Aorta (tissue), 5 donors: ENCODE measurements at regions of chr10 and their contacts with region 1.

Region 1: DNA sequence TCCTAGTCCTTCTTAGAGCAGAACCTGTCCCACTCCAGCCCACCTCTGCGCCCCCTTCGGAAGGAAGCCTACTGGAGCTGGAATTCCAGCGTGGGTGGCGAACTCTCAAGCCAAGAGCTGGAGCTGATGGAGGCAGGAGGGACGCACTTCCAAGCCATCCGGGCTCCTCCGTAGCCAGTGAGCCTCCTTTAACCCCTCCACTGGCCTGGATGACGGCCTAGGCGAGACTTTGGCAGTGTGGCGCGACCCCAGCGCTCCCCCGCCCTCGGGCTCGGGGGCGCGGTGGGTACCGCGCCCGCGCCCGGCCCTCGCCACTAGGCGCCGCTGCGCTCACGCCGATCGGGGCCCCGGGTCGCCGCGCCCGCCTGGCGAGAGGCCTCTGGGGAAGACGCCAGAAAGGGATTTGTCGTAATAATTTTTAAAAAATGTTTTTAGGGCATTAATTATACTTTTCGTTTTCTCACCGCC is 5.1 kb upstream of the EMX2 start:
- DNase-seq: no peak
- ATAC-seq: no peak
- H3K4me3 ChIP-seq: no peak overlapping the region
- H3K27ac ChIP-seq: no peak overlapping the region
- H3K4me1 ChIP-seq: no peaks in the 10 kb centered on the region
- H3K27me3 ChIP-seq: no peaks in the 10 kb centered on the region

Region 2: GRCh38 chr10:117425974-117426566 is 111.4 kb before region 1 on chr10:
- intact Hi-C with region 1: no loop called
- DNase-seq: no peak
- ATAC-seq: no peak
- H3K4me3 ChIP-seq: no peak overlapping the region
- H3K27ac ChIP-seq: no peak overlapping the region
- H3K4me1 ChIP-seq: no peaks in the 10 kb centered on the region
- H3K27me3 ChIP-seq: no peaks in the 10 kb centered on the region

Region 3: DNA sequence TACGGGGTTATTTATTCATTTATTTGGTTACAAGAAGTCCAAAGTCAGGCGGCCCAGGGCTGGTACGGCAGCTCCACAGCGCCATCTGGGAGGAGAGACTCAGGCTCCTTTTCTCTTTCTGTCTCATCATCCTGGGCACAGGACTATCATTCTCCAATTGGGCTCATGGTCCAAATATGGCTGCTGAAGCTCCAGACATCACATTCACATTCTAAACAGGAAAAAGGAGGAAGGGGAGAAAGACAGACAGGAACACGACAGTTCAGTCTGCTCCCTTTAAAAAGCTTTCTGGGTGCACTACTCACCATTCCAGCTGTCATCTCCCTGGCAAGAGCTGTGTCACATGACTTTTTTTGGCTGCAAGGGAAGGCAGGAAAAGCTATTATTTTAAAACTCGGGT is 87.8 kb before region 1 on chr10:
- intact Hi-C with region 1: loop called in 1 of 2 experiments (anchors 5 kb)
- DNase-seq: peak in 1 of 2 donors; percentile 58
- ATAC-seq: peak; percentile 45
- H3K4me3 ChIP-seq: no peak overlapping the region
- H3K27ac ChIP-seq: no peak overlapping the region
- H3K4me1 ChIP-seq: no peaks in the 10 kb centered on the region
- H3K27me3 ChIP-seq: no peaks in the 10 kb centered on the region

Region 4: GRCh38 chr10:117757086-117757720 is 219.7 kb after region 1 on chr10:
- intact Hi-C with region 1: no loop called
- DNase-seq: no peak
- ATAC-seq: no peak
- H3K4me3 ChIP-seq: no peak overlapping the region
- H3K27ac ChIP-seq: no peak overlapping the region
- H3K4me1 ChIP-seq: no peaks in the 10 kb centered on the region
- H3K27me3 ChIP-seq: peaks cover 0 to 2% of the 10 kb centered on the region in 2 donors

Region 5: DNA sequence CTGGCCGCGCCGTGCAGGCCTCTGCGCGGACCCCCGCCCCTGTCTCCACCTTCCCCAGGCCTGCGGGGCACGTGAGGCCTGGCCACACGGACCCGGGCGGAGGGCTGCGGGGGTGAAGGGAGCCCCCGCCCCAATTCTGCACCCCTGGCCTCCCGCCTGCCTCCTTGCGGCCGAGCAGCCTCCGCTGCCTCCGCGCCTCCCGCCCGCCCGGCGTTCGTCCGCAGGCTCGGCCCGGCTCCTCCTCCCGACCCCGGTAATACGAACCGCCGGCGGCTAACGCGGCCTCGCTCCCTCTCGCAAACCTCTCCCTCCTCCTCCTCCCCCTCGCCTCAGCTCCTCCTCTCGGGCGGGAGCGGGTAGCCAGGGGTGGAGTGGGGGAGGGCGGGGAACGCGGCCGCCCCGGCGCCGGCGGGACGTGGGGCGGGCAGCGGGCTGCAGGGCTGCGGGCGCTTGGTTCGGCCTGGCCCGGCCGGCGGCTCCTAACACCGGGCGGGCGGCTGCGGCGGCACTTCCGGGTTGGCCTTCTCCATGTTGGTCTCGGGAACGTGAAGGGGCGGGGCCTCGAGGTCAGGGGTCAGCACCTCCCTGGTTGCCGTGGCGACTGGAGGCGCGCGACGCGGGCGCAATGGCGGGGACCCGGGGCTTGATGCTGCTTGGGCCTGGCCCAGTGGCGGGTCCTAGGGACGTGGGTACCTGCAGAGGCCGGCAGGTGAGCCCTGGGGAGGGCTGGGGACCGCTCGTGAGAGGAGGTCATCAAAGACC is 509.1 kb after region 1 on chr10 and contains the start of gene RAB11FIP2:
- intact Hi-C with region 1: loop called in 1 of 2 experiments (anchors 10 kb)
- DNase-seq: peak; percentile 98 to 100
- ATAC-seq: peak; percentile 97
- H3K4me3 ChIP-seq: peak within 1 kb of the TSS; percentile 46 to 81
- H3K27ac ChIP-seq: peak within 1 kb of the TSS; percentile 70 to 87
- H3K4me1 ChIP-seq: no peaks in the 10 kb centered on the region
- H3K27me3 ChIP-seq: no peaks in the 10 kb centered on the region
- total RNA-seq, gene RAB11FIP2: 24.7 to 25.1 TPM

Region 6: DNA sequence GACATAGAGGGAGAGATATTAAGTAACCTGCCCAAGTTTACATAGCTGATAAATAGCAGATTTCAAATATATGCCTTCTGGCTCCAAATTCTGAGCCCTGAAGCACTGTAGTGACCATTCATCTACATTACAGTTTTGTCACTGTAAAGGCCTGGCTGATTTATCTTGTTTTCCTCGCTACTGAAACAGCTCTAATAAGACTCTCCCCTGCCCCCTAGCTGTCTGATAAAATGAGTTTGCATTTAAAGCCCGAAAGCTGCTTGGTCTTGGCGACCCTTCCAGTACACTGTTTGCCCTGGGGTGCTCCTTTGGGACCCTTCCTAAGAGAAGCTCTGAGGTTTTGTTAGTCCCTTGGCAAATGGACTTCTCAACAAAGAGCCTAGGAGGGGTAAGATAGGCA is 569.0 kb after region 1 on chr10:
- intact Hi-C with region 1: loop called in 1 of 2 experiments (anchors 10 kb)
- DNase-seq: no peak
- ATAC-seq: no peak
- H3K4me3 ChIP-seq: no peak overlapping the region
- H3K27ac ChIP-seq: no peak overlapping the region
- H3K4me1 ChIP-seq: no peaks in the 10 kb centered on the region
- H3K27me3 ChIP-seq: no peaks in the 10 kb centered on the region

Region 7: GRCh38 chr10:118241229-118242137 is 704.0 kb after region 1 on chr10:
- intact Hi-C with region 1: loop called in 1 of 2 experiments (anchors 10 kb)
- DNase-seq: peak; percentile 77 to 90
- ATAC-seq: peak; percentile 84
- H3K4me3 ChIP-seq: no peak overlapping the region
- H3K27ac ChIP-seq: no peak overlapping the region
- H3K4me1 ChIP-seq: no peaks in the 10 kb centered on the region
- H3K27me3 ChIP-seq: peaks cover 0 to 2% of the 10 kb centered on the region in 2 donors